CD8-positive, alpha-beta T cell (primary cell): ENCODE measurements at regions of chr1 and their contacts with region 1.

Region 1: DNA sequence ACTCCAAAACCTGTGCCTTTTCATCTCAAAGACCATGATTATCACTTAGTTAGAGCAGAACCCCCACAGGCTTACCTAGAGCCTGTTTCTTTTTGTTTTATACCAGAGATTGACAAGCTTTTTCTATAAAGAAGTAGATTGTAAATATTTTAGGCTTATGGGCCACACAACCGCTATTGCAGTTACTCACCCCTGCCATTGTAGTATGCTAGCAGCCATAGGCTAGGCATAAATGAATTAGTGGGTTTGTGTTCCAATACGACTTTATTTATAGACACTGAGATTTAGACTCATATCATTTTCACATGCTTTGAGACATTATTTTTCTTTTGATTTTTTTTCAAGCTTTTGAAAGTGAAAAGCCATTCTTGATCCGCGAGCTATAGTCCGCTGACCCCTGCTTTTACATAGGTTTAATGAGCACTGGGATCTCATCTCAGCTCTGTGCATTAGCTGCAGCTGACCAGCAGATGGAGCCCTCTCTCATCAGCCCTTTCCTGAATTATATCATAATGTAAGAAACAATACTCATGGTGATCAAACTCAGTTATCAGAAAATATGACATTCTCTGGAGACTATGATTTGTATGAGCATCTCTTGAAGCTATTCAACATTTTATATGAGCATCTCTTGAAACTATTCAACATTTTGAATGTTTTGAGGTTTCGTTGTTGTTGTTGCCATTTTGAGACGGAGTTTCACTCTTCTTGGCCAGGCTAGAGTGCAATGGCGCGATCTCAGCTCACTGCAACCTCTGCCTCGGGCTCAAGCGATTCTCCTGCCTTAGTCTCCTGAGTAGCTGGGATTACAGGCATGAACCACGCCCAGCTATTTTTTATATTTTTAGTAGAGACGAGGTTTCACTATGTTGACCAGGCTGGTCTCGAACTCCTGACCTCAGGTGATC is 111.9 kb upstream of the L1TD1 start:
- DNase-seq: peak in 6 of 9 experiments; percentile 10 to 48 (median 30)
- ATAC-seq: peak; percentile 40
- H3K4me3 ChIP-seq: no peak overlapping the region
- H3K4me3 Mint-ChIP-seq: no peak overlapping the region
- H3K27ac ChIP-seq: no peak overlapping the region
- H3K27ac Mint-ChIP-seq: no peak overlapping the region
- H3K4me1 ChIP-seq: no peaks in the 10 kb centered on the region
- H3K4me1 Mint-ChIP-seq: no peaks in the 10 kb centered on the region
- H3K27me3 ChIP-seq: no peaks in the 10 kb centered on the region
- H3K27me3 Mint-ChIP-seq: no peaks in the 10 kb centered on the region
- CTCF ChIP-seq: peak; percentile 87

Region 2: DNA sequence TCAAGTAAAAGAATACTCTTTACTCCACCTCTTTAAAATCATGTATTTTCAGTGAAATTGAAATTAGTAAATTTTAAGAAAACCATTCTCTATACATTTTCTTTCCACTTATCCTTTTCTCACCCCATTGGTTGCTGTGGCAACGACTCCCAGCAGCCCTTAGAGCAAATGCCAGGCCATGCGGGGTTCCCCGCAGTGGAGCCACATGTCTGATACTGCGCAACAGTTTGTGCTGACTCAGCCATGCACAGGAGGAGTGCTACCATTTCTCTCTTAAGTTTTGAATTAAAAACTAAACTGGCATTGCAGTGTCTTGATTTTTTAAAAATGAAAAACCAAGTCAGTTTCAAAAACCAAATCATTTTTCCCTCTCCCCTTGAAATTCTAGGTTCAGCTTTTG is 102.1 kb before region 1 on chr1:
- CTCF ChIA-PET with region 1: no interaction called
- POLR2A ChIA-PET with region 1: no interaction called
- intact Hi-C with region 1: no loop called
- DNase-seq: no peak
- ATAC-seq: no peak
- H3K4me3 ChIP-seq: no peak overlapping the region
- H3K4me3 Mint-ChIP-seq: no peak overlapping the region
- H3K27ac ChIP-seq: no peak overlapping the region
- H3K27ac Mint-ChIP-seq: no peak overlapping the region
- H3K4me1 ChIP-seq: no peaks in the 10 kb centered on the region
- H3K4me1 Mint-ChIP-seq: peaks cover 5% of the 10 kb centered on the region
- H3K27me3 ChIP-seq: no peaks in the 10 kb centered on the region
- H3K27me3 Mint-ChIP-seq: no peaks in the 10 kb centered on the region
- CTCF ChIP-seq: no peak

Region 3: GRCh38 chr1:61993331-61993961 is 89.3 kb before region 1 on chr1:
- CTCF ChIA-PET with region 1: no interaction called
- POLR2A ChIA-PET with region 1: no interaction called
- intact Hi-C with region 1: no loop called
- DNase-seq: no peak
- ATAC-seq: no peak
- H3K4me3 ChIP-seq: no peak overlapping the region
- H3K4me3 Mint-ChIP-seq: no peak overlapping the region
- H3K27ac ChIP-seq: no peak overlapping the region
- H3K27ac Mint-ChIP-seq: no peak overlapping the region
- H3K4me1 ChIP-seq: no peaks in the 10 kb centered on the region
- H3K4me1 Mint-ChIP-seq: no peaks in the 10 kb centered on the region
- H3K27me3 ChIP-seq: no peaks in the 10 kb centered on the region
- H3K27me3 Mint-ChIP-seq: no peaks in the 10 kb centered on the region
- CTCF ChIP-seq: no peak

Region 4: GRCh38 chr1:62093261-62093660 is 10.6 kb after region 1 on chr1:
- CTCF ChIA-PET with region 1: interaction called, 20 read pairs
- POLR2A ChIA-PET with region 1: no interaction called
- intact Hi-C with region 1: no loop called
- DNase-seq: no peak
- ATAC-seq: no peak
- H3K4me3 ChIP-seq: no peak overlapping the region
- H3K4me3 Mint-ChIP-seq: no peak overlapping the region
- H3K27ac ChIP-seq: no peak overlapping the region
- H3K27ac Mint-ChIP-seq: no peak overlapping the region
- H3K4me1 ChIP-seq: no peaks in the 10 kb centered on the region
- H3K4me1 Mint-ChIP-seq: no peaks in the 10 kb centered on the region
- H3K27me3 ChIP-seq: no peaks in the 10 kb centered on the region
- H3K27me3 Mint-ChIP-seq: no peaks in the 10 kb centered on the region
- CTCF ChIP-seq: no peak

Region 5: DNA sequence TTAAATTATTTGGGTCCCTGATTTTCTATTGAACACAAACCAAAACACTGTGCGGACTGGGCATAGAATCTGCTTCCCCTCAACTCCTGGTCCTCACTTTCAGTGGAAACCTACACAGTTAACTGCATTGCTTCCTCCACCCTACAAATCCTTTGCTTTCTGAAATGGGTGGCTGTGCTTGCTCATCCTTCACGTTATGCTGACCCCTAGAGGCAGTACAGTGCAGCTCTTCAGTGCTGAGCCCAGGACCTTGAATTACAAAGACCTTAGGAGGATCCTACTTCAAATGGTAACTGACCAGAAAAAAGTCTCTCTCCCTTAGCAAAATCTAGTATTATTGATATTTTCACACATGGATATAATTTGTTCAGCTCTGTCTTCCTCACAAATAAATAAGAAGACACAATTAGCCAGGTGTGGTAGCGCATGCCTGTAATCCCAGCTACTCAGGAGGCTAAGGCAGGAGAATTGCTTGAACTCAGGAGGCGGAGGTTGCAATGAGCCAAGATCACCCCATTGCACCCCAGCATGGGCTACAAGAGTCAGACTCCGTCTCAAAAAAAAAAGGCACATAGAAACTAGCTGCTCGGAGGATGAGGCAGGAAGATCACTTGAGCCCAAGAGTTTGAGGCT is 48.5 kb after region 1 on chr1:
- CTCF ChIA-PET with region 1: interaction called, 4 read pairs
- POLR2A ChIA-PET with region 1: no interaction called
- intact Hi-C with region 1: loop called in 1 of 2 experiments (anchors 2 kb)
- DNase-seq: peak in 3 of 9 experiments; percentile 7 to 40 (median 12)
- ATAC-seq: no peak
- H3K4me3 ChIP-seq: no peak overlapping the region
- H3K4me3 Mint-ChIP-seq: no peak overlapping the region
- H3K27ac ChIP-seq: no peak overlapping the region
- H3K27ac Mint-ChIP-seq: no peak overlapping the region
- H3K4me1 ChIP-seq: no peaks in the 10 kb centered on the region
- H3K4me1 Mint-ChIP-seq: no peaks in the 10 kb centered on the region
- H3K27me3 ChIP-seq: no peaks in the 10 kb centered on the region
- H3K27me3 Mint-ChIP-seq: no peaks in the 10 kb centered on the region
- CTCF ChIP-seq: peak; percentile 60

Region 6: GRCh38 chr1:62746085-62746808 is 663.5 kb after region 1 on chr1:
- CTCF ChIA-PET with region 1: interaction called, 10 read pairs
- POLR2A ChIA-PET with region 1: no interaction called
- intact Hi-C with region 1: loop called in 1 of 2 experiments (anchors 2 kb)
- DNase-seq: peak in 2 of 9 experiments; percentile 44 to 59
- ATAC-seq: no peak
- H3K4me3 ChIP-seq: no peak overlapping the region
- H3K4me3 Mint-ChIP-seq: no peak overlapping the region
- H3K27ac ChIP-seq: no peak overlapping the region
- H3K27ac Mint-ChIP-seq: no peak overlapping the region
- H3K4me1 ChIP-seq: no peaks in the 10 kb centered on the region
- H3K4me1 Mint-ChIP-seq: no peaks in the 10 kb centered on the region
- H3K27me3 ChIP-seq: no peaks in the 10 kb centered on the region
- H3K27me3 Mint-ChIP-seq: peaks cover 5% of the 10 kb centered on the region
- CTCF ChIP-seq: peak; percentile 70